ENCODE measurements at regions of chr19 and their contacts with region 1.

Region 1: GRCh38 chr19:55503502-55504251 is 15.4 kb downstream of the SSC5D start:
- DNase-seq: peak; percentile 81 to 98 (median 92)
- ATAC-seq: peak; percentile 98
- H3K4me3 ChIP-seq: peak overlapping the region; percentile 79
- H3K4me3 Mint-ChIP-seq: peak overlapping the region; percentile 78 to 89 (median 84)
- H3K27ac ChIP-seq: peak overlapping the region; percentile 46
- H3K27ac Mint-ChIP-seq: peak overlapping the region; percentile 59 to 96 (median 82)
- H3K4me1 ChIP-seq: peaks cover 4% of the 10 kb centered on the region in 2 donors
- H3K4me1 Mint-ChIP-seq: peaks cover 0 to 22% (median 10%) of the 10 kb centered on the region in 7 donors
- H3K27me3 ChIP-seq: no peaks in the 10 kb centered on the region
- H3K27me3 Mint-ChIP-seq: peaks cover 0 to 8% (median 6%) of the 10 kb centered on the region in 5 donors

Region 2: GRCh38 chr19:55146078-55146704 is 357.5 kb before region 1 on chr19:
- CTCF ChIA-PET with region 1: interaction called, 71 read pairs
- POLR2A ChIA-PET with region 1: interaction called, 4 read pairs
- intact Hi-C with region 1: loop called in 1 of 2 experiments (anchors 1 kb)
- DNase-seq: no peak
- ATAC-seq: no peak
- H3K4me3 ChIP-seq: no peak overlapping the region
- H3K4me3 Mint-ChIP-seq: peak overlapping the region in 1 of 10 donors; percentile 28
- H3K27ac ChIP-seq: no peak overlapping the region
- H3K27ac Mint-ChIP-seq: no peak overlapping the region
- H3K4me1 ChIP-seq: no peaks in the 10 kb centered on the region
- H3K4me1 Mint-ChIP-seq: peaks cover under 1 to 14% (median 8%) of the 10 kb centered on the region in 7 donors
- H3K27me3 ChIP-seq: peaks cover 10 to 11% of the 10 kb centered on the region in 2 donors
- H3K27me3 Mint-ChIP-seq: peaks cover 49 to 65% (median 52%) of the 10 kb centered on the region in 5 donors

Region 3: GRCh38 chr19:55301459-55302317 is 202.0 kb before region 1 on chr19:
- CTCF ChIA-PET with region 1: interaction called, 5 read pairs
- POLR2A ChIA-PET with region 1: no interaction called
- intact Hi-C with region 1: loop called in 1 of 2 experiments (anchors 2 kb)
- DNase-seq: peak; percentile 84 to 97 (median 91)
- ATAC-seq: peak; percentile 97
- H3K4me3 ChIP-seq: peak overlapping the region; percentile 61
- H3K4me3 Mint-ChIP-seq: peak overlapping the region; percentile 77 to 97 (median 88)
- H3K27ac ChIP-seq: peak overlapping the region; percentile 66
- H3K27ac Mint-ChIP-seq: peak overlapping the region; percentile 66 to 95 (median 84)
- H3K4me1 ChIP-seq: peaks cover 5 to 10% of the 10 kb centered on the region in 2 donors
- H3K4me1 Mint-ChIP-seq: peaks cover 0 to 17% (median 11%) of the 10 kb centered on the region in 7 donors
- H3K27me3 ChIP-seq: no peaks in the 10 kb centered on the region
- H3K27me3 Mint-ChIP-seq: peaks cover 0 to 3% (median 0%) of the 10 kb centered on the region in 5 donors

Region 4: GRCh38 chr19:55418185-55418584 is 85.5 kb before region 1 on chr19:
- CTCF ChIA-PET with region 1: interaction called, 6 read pairs
- POLR2A ChIA-PET with region 1: no interaction called
- intact Hi-C with region 1: loop called in 1 of 2 experiments (anchors 2 kb)
- DNase-seq: peak in 8 of 9 donors; percentile 34 to 72 (median 58)
- ATAC-seq: peak; percentile 82
- H3K4me3 ChIP-seq: no peak overlapping the region
- H3K4me3 Mint-ChIP-seq: peak overlapping the region in 2 of 10 donors; percentile 30 to 41
- H3K27ac ChIP-seq: no peak overlapping the region
- H3K27ac Mint-ChIP-seq: peak overlapping the region in 4 of 9 donors; percentile 7 to 90 (median 31)
- H3K4me1 ChIP-seq: peaks cover 16 to 29% of the 10 kb centered on the region in 2 donors
- H3K4me1 Mint-ChIP-seq: peaks cover 7 to 36% (median 23%) of the 10 kb centered on the region in 7 donors
- H3K27me3 ChIP-seq: no peaks in the 10 kb centered on the region
- H3K27me3 Mint-ChIP-seq: peaks cover 0 to 24% (median 0%) of the 10 kb centered on the region in 5 donors

Region 5: DNA sequence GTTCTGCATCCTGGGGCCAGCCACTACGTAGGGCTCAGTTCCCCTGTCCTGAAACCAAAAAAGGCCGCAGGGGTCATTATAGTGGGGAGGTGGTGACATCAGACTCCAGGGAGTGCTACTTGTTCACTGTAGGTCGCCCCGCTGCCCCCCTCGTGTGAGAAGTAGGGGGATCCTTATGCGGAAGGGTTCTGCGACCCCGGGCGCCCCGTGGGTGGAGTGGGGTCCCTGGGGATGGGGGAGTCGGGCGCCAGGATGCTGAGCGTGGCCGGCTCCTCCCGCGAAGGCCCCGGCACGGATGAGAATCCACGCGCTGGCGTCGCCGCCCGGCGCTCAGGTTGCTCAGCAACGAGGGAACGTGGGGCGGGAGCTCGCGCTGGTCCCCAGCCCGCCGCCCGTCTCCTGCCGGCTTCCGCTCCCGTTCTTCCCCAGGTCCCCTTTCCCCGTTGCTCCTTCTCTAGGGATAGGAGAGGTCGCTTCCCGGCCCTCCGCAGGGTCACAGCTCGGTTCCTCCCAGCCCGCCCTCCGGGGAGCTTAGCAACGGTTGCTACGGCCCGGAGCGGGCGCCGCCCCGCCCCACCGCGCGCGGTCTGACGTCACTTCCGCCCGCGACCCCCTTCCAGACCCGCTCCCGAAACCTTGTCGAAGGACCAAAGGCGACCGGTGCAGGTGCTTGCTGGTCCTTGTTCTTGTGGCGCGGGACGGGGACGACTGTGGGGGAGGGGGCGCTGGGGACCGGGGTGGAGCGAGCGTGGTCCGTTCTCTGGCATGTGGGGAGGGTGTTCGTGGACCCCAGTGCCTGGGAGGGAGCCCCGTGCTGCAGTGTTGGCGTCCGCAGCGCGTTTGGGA is 18.9 kb before region 1 on chr19 and contains the start of gene NAT14:
- CTCF ChIA-PET with region 1: interaction called, 3 read pairs
- POLR2A ChIA-PET with region 1: interaction called, 3 read pairs
- intact Hi-C with region 1: loop called (anchors 1 to 2 kb)
- DNase-seq: peak; percentile 41 to 79 (median 62)
- ATAC-seq: peak; percentile 78
- H3K4me3 ChIP-seq: peak within 1 kb of the TSS; percentile 75
- H3K4me3 Mint-ChIP-seq: peak within 1 kb of the TSS; percentile 72 to 89 (median 78)
- H3K27ac ChIP-seq: peak within 1 kb of the TSS; percentile 63
- H3K27ac Mint-ChIP-seq: peak within 1 kb of the TSS; percentile 8 to 93 (median 83)
- H3K4me1 ChIP-seq: peaks cover 12 to 13% of the 10 kb centered on the region in 2 donors
- H3K4me1 Mint-ChIP-seq: peaks cover 5 to 23% (median 9%) of the 10 kb centered on the region in 7 donors
- H3K27me3 ChIP-seq: no peaks in the 10 kb centered on the region
- H3K27me3 Mint-ChIP-seq: no peaks in the 10 kb centered on the region
- total RNA-seq, gene NAT14: 2.7 to 12.8 (median 7.5) TPM

Region 6: GRCh38 chr19:55605207-55605636 is 101.5 kb after region 1 on chr19:
- CTCF ChIA-PET with region 1: interaction called, 13 read pairs
- POLR2A ChIA-PET with region 1: interaction called, 7 read pairs
- intact Hi-C with region 1: no loop called
- DNase-seq: peak; percentile 90 to 99 (median 97)
- ATAC-seq: peak; percentile 87
- H3K4me3 ChIP-seq: peak overlapping the region; percentile 51
- H3K4me3 Mint-ChIP-seq: peak overlapping the region; percentile 78 to 98 (median 90)
- H3K27ac ChIP-seq: peak overlapping the region; percentile 90
- H3K27ac Mint-ChIP-seq: peak overlapping the region; percentile 77 to 96 (median 91)
- H3K4me1 ChIP-seq: peaks cover 7 to 18% of the 10 kb centered on the region in 2 donors
- H3K4me1 Mint-ChIP-seq: peaks cover 37 to 70% (median 64%) of the 10 kb centered on the region in 7 donors
- H3K27me3 ChIP-seq: no peaks in the 10 kb centered on the region
- H3K27me3 Mint-ChIP-seq: peaks cover 0 to 3% (median 0%) of the 10 kb centered on the region in 5 donors